Posterior cingulate gyrus (tissue), 11 donors: ENCODE measurements at regions of chr22 and their contacts with region 1.

Region 1: DNA sequence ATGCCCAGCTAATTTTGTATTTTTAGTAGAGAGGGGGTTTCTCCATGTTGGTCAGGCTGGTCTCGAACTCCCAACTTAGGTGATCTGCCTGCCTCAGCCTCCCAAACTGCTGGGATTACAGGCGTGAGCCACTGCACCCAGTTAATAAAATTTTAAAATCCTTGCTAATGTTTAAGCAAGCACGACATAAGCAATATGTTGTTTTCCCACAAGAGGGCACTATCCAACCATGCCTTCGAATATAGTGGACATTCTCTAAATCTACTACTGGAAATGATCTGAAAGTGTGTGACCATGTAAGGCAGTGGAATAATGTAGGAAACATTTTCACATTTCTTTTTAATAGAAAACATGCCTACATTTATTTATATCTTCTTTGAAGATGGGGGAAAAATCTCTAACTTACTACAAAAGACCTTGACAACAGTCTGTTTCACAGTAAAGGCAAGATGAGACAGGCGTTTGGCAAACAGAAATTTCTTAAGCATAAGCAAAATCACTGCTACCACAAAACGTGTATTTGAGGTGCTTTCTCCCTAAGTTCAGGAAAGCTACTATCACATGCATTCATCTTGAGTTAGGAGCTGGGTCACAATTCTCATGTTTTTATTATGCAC is 38.2 kb downstream of the PITPNB start:
- DNase-seq: peak in 3 of 10 donors; percentile 20 to 54 (median 45)

Region 2: GRCh38 chr22:27825174-27825573 is 55.7 kb before region 1 on chr22:
- intact Hi-C with region 1: no loop called
- DNase-seq: peak in 1 of 10 donors; percentile 13

Region 3: DNA sequence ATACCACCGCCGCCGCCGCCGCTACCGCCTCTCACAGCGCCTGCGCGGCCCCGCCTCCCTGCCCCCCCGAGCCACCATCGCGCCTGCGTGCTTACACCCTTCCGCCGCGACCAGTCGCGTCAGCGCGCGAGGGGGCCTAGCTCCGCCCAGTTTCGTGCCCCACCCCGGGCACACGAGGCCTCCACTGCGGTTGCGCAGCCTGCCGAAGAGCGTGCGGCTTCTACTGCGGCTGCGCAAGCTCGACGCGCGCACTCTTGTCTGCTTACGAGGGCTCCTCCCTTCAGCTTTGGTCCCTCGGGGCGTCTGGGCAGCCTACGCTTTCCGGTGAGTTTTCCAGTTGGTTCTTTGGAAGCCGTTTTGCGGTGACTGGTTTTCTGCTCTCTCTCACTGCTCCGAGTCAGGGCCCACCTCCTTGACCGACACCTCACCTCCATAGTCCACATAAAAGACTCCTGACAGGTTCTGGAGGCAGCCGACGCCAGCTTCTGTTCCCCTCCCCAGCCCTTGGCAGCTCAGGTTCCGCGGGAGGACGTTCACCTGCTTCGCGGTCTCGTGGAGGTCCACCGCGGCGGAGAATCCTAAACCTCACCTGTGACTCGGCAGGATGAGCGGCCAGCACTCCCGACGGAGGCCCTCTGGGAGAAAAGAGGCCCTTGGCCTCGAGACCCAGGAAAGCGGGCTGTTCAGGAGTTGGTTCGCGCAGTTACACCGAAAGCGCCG is 38.5 kb after region 1 on chr22 and contains the start of gene PITPNB:
- intact Hi-C with region 1: loop called (anchors 2 kb)
- DNase-seq: peak; percentile 87 to 99 (median 94)

Region 4: GRCh38 chr22:27947448-27947847 is 66.6 kb after region 1 on chr22:
- intact Hi-C with region 1: no loop called
- DNase-seq: no peak

Region 5: GRCh38 chr22:28009272-28009827 is 128.5 kb after region 1 on chr22:
- intact Hi-C with region 1: loop called (anchors 2 kb)
- DNase-seq: peak; percentile 69 to 97 (median 82)